H1 (cell line): ENCODE measurements at regions of chr4 and their contacts with region 1.

Region 1: DNA sequence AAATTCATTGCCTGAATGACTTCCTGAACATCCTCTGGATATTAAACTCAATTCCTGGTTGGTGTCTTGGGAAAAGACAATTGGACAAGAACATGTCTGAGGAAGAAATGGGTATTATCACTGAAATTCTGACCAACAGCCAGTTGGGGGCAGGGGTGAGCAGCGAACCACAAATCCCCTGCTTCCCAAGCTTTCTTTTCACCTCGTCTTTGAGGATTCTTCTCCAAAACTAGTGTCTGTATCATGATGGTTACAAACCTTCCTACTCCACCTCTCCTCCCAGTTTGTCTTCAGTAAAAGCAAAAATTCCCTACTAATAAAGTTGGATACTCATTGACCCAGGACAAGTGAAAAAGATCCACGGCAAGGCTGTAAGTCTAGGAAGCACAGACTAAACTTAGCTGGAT is 48.3 kb upstream of the WDR1 start:
- DNase-seq: peak; percentile 15 to 77
- H3K4me3 ChIP-seq: no peak overlapping the region
- H3K27ac ChIP-seq: no peak overlapping the region
- H3K4me1 ChIP-seq: no peaks in the 10 kb centered on the region
- H3K27me3 ChIP-seq: no peaks in the 10 kb centered on the region; a peak in 2 of 7 replicates
- CTCF ChIP-seq: peak; percentile 62 to 82 (median 66)
- EP300 ChIP-seq: no peak
- POLR2A ChIP-seq: no peak
- RAD21 ChIP-seq: peak; percentile 86 to 89

Region 2: GRCh38 chr4:10092481-10093270 is 72.2 kb before region 1 on chr4:
- CTCF ChIA-PET with region 1: no interaction called
- POLR2A ChIA-PET with region 1: no interaction called
- DNase-seq: no peak
- H3K4me3 ChIP-seq: no peak overlapping the region
- H3K27ac ChIP-seq: no peak overlapping the region
- H3K4me1 ChIP-seq: peaks cover 0 to 16% (median 9%) of the 10 kb centered on the region in 4 experiments; a peak in 5 of 7 replicates
- H3K27me3 ChIP-seq: no peaks in the 10 kb centered on the region
- CTCF ChIP-seq: no peak
- EP300 ChIP-seq: no peak
- POLR2A ChIP-seq: no peak; a peak in 1 of 3 replicates
- RAD21 ChIP-seq: no peak

Region 3: DNA sequence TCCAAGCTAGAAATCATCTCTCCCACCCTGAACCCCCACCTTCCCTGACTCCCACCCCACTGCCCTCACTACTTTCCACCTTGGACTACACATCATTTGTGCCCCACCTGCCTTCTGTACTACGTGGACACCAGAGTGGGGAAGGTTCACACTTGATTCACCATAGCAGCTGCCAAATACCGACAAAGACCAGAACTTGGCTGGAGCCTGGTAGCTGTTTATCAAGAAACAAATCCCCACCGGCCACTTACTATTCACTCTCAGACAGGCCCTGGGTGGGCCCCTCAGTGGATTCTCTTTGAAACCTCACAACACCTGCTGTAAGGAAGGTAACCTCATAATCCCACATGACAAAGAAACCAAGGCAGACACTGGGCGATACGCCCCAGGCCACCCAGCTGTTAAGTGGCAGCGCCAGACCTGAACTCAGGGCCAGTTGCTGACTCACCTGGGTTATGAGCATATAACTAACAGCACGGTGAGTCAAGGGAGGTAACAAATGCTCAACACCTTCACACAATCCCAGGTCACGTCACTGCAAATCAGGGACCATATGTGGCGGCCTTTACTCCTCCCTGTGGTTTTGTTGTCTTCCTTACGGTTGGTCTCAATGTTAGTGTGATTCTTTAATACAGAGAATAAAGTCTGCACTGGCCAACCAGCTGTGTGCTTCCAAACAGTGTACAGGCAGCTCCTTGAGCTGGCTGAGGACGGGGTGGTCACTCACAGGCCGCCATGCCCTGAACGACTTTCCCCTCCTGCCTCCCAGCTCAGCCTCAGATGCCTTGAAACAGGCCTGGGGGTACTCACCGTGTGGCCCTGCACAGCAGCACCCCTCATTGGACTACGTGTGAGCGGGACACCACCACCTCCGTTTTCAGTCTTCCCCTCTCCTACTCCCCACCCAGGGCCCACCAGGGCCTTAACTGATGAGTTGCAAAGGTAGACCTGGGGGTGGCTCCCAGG is 55.8 kb before region 1 on chr4:
- CTCF ChIA-PET with region 1: no interaction called
- POLR2A ChIA-PET with region 1: no interaction called
- DNase-seq: no peak
- H3K4me3 ChIP-seq: no peak overlapping the region
- H3K27ac ChIP-seq: no peak overlapping the region
- H3K4me1 ChIP-seq: peaks cover 11 to 50% (median 22%) of the 10 kb centered on the region in 4 experiments
- H3K27me3 ChIP-seq: no peaks in the 10 kb centered on the region
- CTCF ChIP-seq: no peak
- EP300 ChIP-seq: no peak
- POLR2A ChIP-seq: peak in 1 of 2 experiments; percentile 42; a peak in 1 of 3 replicates
- RAD21 ChIP-seq: no peak

Region 4: DNA sequence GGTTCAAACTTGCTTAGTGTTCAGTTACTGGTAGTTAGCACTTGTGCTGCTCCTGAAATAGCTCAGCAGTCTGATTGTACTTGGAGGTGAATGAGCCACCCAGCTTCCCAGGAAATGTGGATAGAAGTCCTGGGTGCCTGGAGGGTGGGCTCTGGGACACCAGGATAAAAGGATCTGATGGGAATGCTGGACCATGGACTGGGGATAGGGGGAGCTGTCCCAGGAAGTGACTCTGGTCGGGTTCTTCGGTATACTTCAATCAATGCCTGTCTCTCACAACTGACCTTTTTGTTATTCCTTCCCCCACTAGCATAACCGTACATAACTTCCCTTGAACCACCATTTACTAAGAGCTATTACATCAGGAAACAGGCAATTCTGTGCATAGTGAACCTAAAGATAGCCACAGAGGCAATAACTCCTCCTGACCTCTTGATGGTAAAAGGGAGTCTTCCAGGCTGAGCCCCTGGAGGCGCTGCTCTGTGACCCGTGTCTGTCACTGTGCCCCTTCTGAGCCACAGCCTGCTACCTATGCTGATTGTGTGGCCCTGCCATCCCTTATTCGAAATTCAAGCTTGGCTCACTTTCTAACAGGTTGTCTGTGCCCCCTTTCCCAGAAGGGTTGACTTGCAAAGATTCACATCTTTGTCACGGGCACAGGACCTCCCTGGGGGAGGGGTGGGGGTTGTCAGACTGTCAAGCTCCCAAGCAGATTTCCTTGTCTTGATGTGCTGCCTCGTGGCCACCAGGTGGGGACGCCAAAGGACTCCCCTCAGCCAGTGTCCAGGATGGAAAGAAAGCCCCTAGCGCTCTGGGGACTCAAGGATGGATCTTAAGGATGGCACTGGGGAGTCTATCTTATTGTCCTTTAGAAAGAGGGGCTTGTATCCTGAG is 23.8 kb before region 1 on chr4:
- CTCF ChIA-PET with region 1: interaction called, 37 read pairs
- POLR2A ChIA-PET with region 1: no interaction called
- DNase-seq: peak in 1 of 2 experiments; percentile 68
- H3K4me3 ChIP-seq: peak overlapping the region in 1 of 4 experiments; percentile 23; a peak in 1 of 8 replicates
- H3K27ac ChIP-seq: no peak overlapping the region
- H3K4me1 ChIP-seq: no peaks in the 10 kb centered on the region
- H3K27me3 ChIP-seq: peaks cover 0 to 8% (median 0%) of the 10 kb centered on the region in 4 experiments; a peak in 2 of 7 replicates
- CTCF ChIP-seq: peak; percentile 72 to 81 (median 79)
- EP300 ChIP-seq: no peak
- POLR2A ChIP-seq: no peak
- RAD21 ChIP-seq: peak; percentile 74

Region 5: DNA sequence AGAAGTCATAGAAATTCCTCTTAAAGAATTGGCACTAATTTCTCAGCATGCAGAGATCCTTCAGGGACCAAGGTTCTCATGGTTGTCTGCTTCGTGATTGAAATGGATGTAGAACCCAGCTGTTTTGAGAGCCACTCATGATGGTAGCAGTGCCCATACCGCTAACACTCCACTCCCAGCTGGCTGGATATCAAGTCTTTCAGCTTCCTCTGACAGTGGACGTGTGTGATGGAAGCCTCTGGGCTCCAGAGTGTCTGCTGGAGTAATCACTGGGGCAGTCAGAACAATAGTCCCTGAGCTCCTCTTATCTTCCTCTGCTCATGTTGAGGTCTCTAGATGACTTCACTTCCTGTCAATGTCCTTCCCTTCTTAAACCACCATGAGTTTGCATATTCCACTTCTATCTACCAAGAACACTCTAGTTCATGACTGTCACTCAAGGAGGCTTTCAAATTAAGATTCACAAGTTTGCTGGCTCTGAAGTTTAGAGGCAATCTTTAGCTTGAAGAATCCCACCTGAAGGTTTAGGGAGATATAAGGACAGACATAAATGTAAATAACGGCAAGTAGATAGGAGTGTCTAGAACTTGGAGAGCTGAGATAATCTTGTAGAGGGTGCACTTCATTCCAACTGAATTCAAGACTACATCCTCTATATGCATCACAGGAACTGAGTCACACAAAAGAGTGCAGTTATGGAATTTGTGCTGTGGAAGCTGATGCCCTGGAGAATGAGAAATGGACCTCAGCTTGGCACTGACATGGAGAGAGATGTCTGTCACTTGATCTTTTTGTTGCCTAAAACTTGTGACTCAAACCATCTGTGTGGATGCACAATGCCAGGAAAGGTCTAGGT is 16.3 kb after region 1 on chr4:
- CTCF ChIA-PET with region 1: interaction called, 69 read pairs
- POLR2A ChIA-PET with region 1: no interaction called
- DNase-seq: no peak
- H3K4me3 ChIP-seq: no peak overlapping the region
- H3K27ac ChIP-seq: no peak overlapping the region
- H3K4me1 ChIP-seq: no peaks in the 10 kb centered on the region
- H3K27me3 ChIP-seq: no peaks in the 10 kb centered on the region
- CTCF ChIP-seq: no peak
- EP300 ChIP-seq: no peak
- POLR2A ChIP-seq: no peak
- RAD21 ChIP-seq: no peak

Region 6: GRCh38 chr4:10346023-10346422 is 181.1 kb after region 1 on chr4:
- CTCF ChIA-PET with region 1: interaction called, 12 read pairs
- POLR2A ChIA-PET with region 1: no interaction called
- DNase-seq: no peak
- H3K4me3 ChIP-seq: no peak overlapping the region
- H3K27ac ChIP-seq: no peak overlapping the region
- H3K4me1 ChIP-seq: no peaks in the 10 kb centered on the region
- H3K27me3 ChIP-seq: no peaks in the 10 kb centered on the region
- CTCF ChIP-seq: no peak
- EP300 ChIP-seq: no peak
- POLR2A ChIP-seq: no peak
- RAD21 ChIP-seq: no peak

Region 7: GRCh38 chr4:10554694-10555093 is 389.8 kb after region 1 on chr4:
- CTCF ChIA-PET with region 1: interaction called, 52 read pairs
- POLR2A ChIA-PET with region 1: no interaction called
- DNase-seq: peak in 1 of 2 experiments; percentile 77
- H3K4me3 ChIP-seq: no peak overlapping the region
- H3K27ac ChIP-seq: no peak overlapping the region
- H3K4me1 ChIP-seq: no peaks in the 10 kb centered on the region
- H3K27me3 ChIP-seq: no peaks in the 10 kb centered on the region
- CTCF ChIP-seq: peak in 2 of 3 experiments; percentile 59 to 75; a peak in 3 of 4 replicates
- EP300 ChIP-seq: no peak
- POLR2A ChIP-seq: no peak
- RAD21 ChIP-seq: peak; percentile 85 to 86